ENCODE measurements at regions of chr1 and their contacts with region 1.

Region 1: DNA sequence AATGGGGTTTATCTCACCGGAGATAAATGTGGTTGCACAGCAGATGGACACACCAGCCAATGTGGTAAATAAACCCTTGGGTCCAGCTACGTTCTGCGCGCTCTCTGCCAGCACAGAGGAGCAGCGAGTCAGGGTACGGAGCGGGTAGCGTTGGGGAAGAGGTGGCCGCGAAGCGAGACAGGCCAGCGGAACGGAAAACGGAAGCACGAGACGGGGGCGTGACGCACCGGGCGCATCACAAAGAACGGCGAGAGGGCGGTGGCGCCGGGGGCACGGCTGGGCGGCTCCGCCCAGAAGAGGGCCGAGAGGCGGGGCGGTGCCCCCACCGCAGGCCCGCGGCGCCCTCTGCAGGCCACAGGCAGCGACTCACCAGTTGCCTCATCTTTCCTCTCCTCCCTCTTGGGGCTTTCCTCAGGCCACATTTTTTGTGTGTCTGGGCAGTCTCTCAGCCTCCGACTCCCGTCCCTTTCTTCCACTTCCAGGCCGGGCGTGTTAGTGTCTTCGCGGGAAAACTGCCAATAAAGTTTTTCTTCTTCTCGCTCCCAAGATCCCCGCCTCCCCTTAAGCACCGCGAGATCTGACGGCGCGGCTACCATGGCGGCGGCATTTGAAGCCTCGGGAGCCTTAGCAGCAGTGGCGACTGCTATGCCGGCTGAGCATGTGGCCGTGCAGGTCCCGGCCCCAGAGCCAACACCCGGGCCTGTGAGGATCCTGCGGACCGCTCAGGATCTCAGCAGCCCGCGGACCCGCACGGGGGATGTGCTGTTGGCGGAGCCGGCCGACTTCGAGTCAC is at the start of gene DDX20:
- DNase-seq: peak; percentile 97 to 98
- ATAC-seq: peak; percentile 99
- H3K4me3 ChIP-seq: peak within 1 kb of the TSS; percentile 93 to 97
- H3K27ac ChIP-seq: peak within 1 kb of the TSS; percentile 1 to 64
- H3K4me1 ChIP-seq: no peaks in the 10 kb centered on the region
- H3K27me3 ChIP-seq: no peaks in the 10 kb centered on the region
- total RNA-seq, gene DDX20: 7.9 to 8.8 TPM

Region 2: DNA sequence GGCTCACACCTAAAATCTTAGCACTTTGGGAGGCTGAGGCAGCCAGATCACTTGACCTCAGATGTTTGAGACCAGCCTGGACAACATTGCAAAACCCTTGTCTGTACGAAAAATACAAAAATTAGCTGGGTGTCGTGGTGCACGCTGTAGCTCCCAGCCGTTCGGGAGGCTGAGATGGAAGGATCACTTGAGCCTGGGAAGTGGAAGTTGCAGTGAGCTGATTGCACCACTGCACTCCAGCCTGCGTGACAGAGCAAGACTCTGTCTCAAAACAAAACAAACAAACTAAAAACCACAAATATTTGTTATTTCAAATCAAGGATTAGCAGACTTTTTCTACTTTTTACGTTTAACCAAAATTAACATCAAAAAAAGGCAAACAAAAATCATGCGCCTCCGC is 47.6 kb before region 1 on chr1:
- intact Hi-C with region 1: no loop called
- DNase-seq: no peak
- ATAC-seq: no peak
- H3K4me3 ChIP-seq: no peak overlapping the region
- H3K27ac ChIP-seq: no peak overlapping the region
- H3K4me1 ChIP-seq: no peaks in the 10 kb centered on the region
- H3K27me3 ChIP-seq: no peaks in the 10 kb centered on the region

Region 3: GRCh38 chr1:111719674-111720132 is 35.8 kb before region 1 on chr1:
- intact Hi-C with region 1: loop called (anchors 5 kb)
- DNase-seq: no peak
- ATAC-seq: no peak
- H3K4me3 ChIP-seq: no peak overlapping the region
- H3K27ac ChIP-seq: no peak overlapping the region
- H3K4me1 ChIP-seq: no peaks in the 10 kb centered on the region
- H3K27me3 ChIP-seq: no peaks in the 10 kb centered on the region

Measured in aorta (tissue), 5 donors.